A673 (cell line): ENCODE measurements at regions of chr3 and their contacts with region 1.

Region 1: GRCh38 chr3:123652346-123652984 is 67.6 kb upstream of the HACD2 start:
- DNase-seq: peak; percentile 78
- H3K4me3 ChIP-seq: no peak overlapping the region
- H3K27ac ChIP-seq: no peak overlapping the region
- H3K4me1 ChIP-seq: peaks cover 14% of the 10 kb centered on the region
- H3K27me3 ChIP-seq: no peaks in the 10 kb centered on the region
- CTCF ChIP-seq: peak; percentile 89

Region 2: GRCh38 chr3:123499322-123499721 is 153.1 kb before region 1 on chr3:
- CTCF ChIA-PET with region 1: no interaction called
- POLR2A ChIA-PET with region 1: no interaction called
- intact Hi-C with region 1: no loop called
- DNase-seq: no peak
- H3K4me3 ChIP-seq: no peak overlapping the region
- H3K27ac ChIP-seq: no peak overlapping the region
- H3K4me1 ChIP-seq: no peaks in the 10 kb centered on the region
- H3K27me3 ChIP-seq: no peaks in the 10 kb centered on the region
- CTCF ChIP-seq: no peak

Region 3: GRCh38 chr3:123642182-123642956 is 10.1 kb before region 1 on chr3:
- CTCF ChIA-PET with region 1: interaction called, 11 read pairs
- POLR2A ChIA-PET with region 1: no interaction called
- intact Hi-C with region 1: no loop called
- DNase-seq: peak; percentile 92
- H3K4me3 ChIP-seq: no peak overlapping the region
- H3K27ac ChIP-seq: no peak overlapping the region
- H3K4me1 ChIP-seq: no peaks in the 10 kb centered on the region
- H3K27me3 ChIP-seq: no peaks in the 10 kb centered on the region
- CTCF ChIP-seq: peak; percentile 97

Region 4: GRCh38 chr3:123718108-123718507 is 65.6 kb after region 1 on chr3:
- CTCF ChIA-PET with region 1: interaction called, 14 read pairs
- POLR2A ChIA-PET with region 1: no interaction called
- intact Hi-C with region 1: loop called (anchors 1 kb)
- DNase-seq: peak; percentile 18
- H3K4me3 ChIP-seq: no peak overlapping the region
- H3K27ac ChIP-seq: no peak overlapping the region
- H3K4me1 ChIP-seq: no peaks in the 10 kb centered on the region
- H3K27me3 ChIP-seq: no peaks in the 10 kb centered on the region
- CTCF ChIP-seq: no peak

Region 5: GRCh38 chr3:123723522-123724168 is 71.2 kb after region 1 on chr3:
- CTCF ChIA-PET with region 1: interaction called, 14 read pairs
- POLR2A ChIA-PET with region 1: no interaction called
- intact Hi-C with region 1: loop called (anchors 1 kb)
- DNase-seq: peak; percentile 91
- H3K4me3 ChIP-seq: no peak overlapping the region
- H3K27ac ChIP-seq: no peak overlapping the region
- H3K4me1 ChIP-seq: no peaks in the 10 kb centered on the region
- H3K27me3 ChIP-seq: no peaks in the 10 kb centered on the region
- CTCF ChIP-seq: peak; percentile 85

Region 6: DNA sequence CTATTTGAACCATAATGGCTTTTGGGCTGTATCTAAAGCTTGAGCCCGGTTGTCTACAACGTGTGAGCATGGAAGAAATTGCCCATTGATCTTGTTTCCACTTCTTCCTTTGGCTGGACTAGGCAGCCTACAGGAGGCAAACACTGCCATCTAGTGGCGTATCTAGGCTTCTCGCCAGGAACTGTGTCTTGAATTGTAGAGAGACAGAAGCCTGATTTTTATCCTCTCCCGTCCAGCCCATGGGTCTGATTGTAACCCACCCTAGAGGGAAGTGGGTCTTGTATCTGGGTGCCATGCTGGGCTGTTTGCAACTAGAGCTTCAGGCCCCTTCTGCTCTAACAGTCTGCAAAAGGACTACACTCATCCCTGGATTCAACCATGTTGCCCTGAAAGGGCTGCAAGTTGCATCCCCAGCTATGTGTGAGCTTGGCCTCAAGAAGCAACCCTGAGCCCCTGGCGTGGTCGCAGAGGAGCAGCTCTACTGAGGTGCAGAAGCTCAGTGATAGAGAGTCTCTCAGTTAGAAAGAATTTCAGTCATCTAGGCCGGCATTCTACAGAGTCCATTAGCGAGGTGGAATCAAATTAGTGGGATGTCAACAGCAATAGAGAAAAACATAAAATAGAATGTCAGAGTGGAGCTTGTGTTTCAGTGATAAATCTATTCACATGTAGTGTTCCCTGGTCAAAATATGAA is 907.6 kb after region 1 on chr3:
- CTCF ChIA-PET with region 1: interaction called, 4 read pairs
- POLR2A ChIA-PET with region 1: no interaction called
- intact Hi-C with region 1: loop called (anchors 10 kb)
- DNase-seq: peak; percentile 93
- H3K4me3 ChIP-seq: no peak overlapping the region
- H3K27ac ChIP-seq: peak overlapping the region; percentile 73
- H3K4me1 ChIP-seq: peaks cover 35% of the 10 kb centered on the region
- H3K27me3 ChIP-seq: no peaks in the 10 kb centered on the region
- CTCF ChIP-seq: peak; percentile 94